Head of caudate nucleus (tissue), 42 donors: ENCODE measurements at regions of chr2 and their contacts with region 1.

Region 1: GRCh38 chr2:37414470-37414949 is 70.1 kb downstream of the QPCT start:
- DNase-seq: peak in 4 of 42 donors; percentile 9 to 30 (median 17)

Region 2: GRCh38 chr2:37344453-37345361 is 69.8 kb before region 1 on chr2 and contains the start of gene QPCT:
- intact Hi-C with region 1: no loop called
- DNase-seq: peak in 30 of 42 donors; percentile 10 to 66 (median 38)

Region 3: GRCh38 chr2:37459095-37459981 is 44.8 kb after region 1 on chr2:
- intact Hi-C with region 1: no loop called
- DNase-seq: no peak

Region 4: DNA sequence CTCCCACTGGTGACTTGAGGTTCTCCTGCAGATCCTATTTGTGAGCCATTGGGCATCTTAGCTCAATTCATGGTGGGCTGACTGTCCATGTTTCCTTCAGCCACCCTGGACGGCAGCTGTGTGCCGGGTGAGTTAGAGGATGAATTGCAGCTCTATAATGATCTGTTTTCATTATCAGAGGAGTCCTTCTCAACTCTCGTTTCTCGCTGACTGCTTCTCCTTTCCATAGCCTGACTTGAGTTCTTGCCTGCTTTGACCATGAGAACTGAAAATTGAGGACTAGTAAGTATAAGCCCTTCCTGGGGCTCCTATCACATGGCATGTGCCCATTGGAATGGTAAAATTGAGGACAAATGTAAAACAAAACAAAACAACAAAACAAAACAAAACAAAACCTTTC is 135.1 kb after region 1 on chr2:
- intact Hi-C with region 1: no loop called
- DNase-seq: no peak

Region 5: GRCh38 chr2:37832590-37833197 is 418.2 kb after region 1 on chr2:
- intact Hi-C with region 1: loop called (anchors 5 kb)
- DNase-seq: peak; percentile 59 to 93 (median 86)

Region 6: GRCh38 chr2:37877457-37878315 is 463.2 kb after region 1 on chr2:
- intact Hi-C with region 1: loop called (anchors 5 kb)
- DNase-seq: peak in 13 of 42 donors; percentile 28 to 78 (median 51)